Ovary (tissue), 10 donors: ENCODE measurements at regions of chr20 and their contacts with region 1.

Region 1: GRCh38 chr20:4108495-4109306 is 93.3 kb upstream of the RNF24 start:
- DNase-seq: peak; percentile 58 to 76 (median 71)
- H3K4me3 ChIP-seq: no peak overlapping the region
- H3K27ac ChIP-seq: no peak overlapping the region
- H3K4me1 ChIP-seq: peaks cover 3% of the 10 kb centered on the region
- H3K27me3 ChIP-seq: no peaks in the 10 kb centered on the region
- CTCF ChIP-seq: peak; percentile 86 to 90 (median 90)
- EP300 ChIP-seq: no peak
- POLR2A ChIP-seq: no peak

Region 2: DNA sequence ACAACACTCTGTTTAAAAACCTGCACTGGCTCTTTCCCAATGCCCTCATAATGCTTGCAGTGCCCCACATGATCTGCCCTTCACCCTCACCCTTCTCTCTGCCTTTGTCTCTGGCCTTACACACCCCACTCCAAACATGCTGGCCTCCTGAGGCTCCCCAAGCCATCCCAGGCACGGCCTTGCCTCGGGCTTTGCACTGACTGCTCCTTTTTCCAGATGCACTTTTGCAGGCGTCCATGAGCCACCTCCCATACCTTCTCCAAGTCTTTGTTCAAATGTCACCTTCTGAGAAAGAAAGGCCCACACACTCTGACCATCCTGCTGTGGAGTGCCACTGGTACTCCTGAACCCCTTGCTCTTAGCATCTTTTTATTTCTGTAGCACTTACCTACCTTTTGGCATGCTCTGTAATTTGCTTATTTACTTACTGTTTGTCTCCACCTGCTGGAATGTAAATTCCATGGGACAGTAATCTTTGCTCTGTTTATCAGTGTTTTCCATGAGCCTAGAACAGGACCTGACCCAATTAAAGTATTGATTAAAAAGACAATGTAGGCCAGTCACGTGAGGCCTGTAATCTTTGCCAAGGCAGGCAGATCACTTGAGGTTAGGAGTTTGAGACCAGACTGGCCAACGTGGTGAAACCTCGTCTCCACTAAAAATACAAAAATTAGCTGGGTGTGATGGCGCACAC is 476.2 kb before region 1 on chr20:
- intact Hi-C with region 1: no loop called
- DNase-seq: no peak
- H3K4me3 ChIP-seq: no peak overlapping the region
- H3K27ac ChIP-seq: no peak overlapping the region
- H3K4me1 ChIP-seq: peaks cover 3% of the 10 kb centered on the region
- H3K27me3 ChIP-seq: no peaks in the 10 kb centered on the region
- CTCF ChIP-seq: no peak
- EP300 ChIP-seq: no peak
- POLR2A ChIP-seq: no peak

Region 3: GRCh38 chr20:4053071-4053919 is 55.4 kb before region 1 on chr20:
- intact Hi-C with region 1: no loop called
- DNase-seq: no peak
- H3K4me3 ChIP-seq: no peak overlapping the region
- H3K27ac ChIP-seq: no peak overlapping the region
- H3K4me1 ChIP-seq: no peaks in the 10 kb centered on the region
- H3K27me3 ChIP-seq: no peaks in the 10 kb centered on the region
- CTCF ChIP-seq: no peak
- EP300 ChIP-seq: no peak
- POLR2A ChIP-seq: no peak

Region 4: DNA sequence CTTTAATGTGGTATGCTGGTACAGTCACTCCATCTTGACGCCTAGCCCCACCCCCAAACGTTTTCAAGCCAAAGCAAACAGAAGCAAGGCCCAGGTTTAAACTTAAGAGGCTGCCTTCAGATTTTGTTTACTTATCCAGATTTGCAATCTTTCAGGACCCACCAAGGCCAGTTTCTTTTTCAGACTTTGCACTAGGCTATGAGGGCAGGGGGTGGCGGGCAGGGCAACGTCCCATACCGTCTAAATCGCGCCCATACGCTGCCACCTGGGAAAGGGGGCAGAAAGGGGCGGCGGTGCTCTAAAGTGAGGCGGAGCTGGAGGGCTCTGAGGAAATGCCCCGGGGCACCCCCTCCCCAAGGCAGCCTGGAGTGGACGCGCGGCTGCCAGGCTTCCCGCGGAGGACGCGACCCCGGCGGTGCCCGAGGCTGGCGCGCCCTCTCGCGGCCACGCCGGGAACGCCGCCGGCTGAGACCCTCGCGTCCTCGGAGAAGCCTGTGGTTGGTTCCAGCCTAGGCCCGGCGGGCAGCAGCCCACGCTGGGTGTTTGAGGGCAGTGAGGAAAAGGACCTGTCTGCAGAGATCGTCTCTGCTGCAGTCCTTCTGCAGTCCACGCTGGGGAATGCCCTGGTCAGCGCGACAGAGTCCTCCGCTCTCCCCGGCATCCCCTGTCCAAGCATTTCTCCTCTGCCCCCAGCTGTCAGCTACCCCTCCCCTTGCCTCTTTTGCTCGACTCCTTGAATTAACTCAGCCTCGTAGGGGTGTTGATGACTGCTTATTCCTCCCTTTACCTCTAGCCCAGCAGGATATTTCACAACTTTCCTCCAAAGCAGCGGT is 483.8 kb after region 1 on chr20:
- intact Hi-C with region 1: loop called in 1 of 4 experiments (anchors 5 kb)
- DNase-seq: peak; percentile 14 to 74 (median 31)
- H3K4me3 ChIP-seq: peak overlapping the region; percentile 20
- H3K27ac ChIP-seq: no peak overlapping the region
- H3K4me1 ChIP-seq: no peaks in the 10 kb centered on the region
- H3K27me3 ChIP-seq: no peaks in the 10 kb centered on the region
- CTCF ChIP-seq: peak; percentile 50 to 70 (median 64)
- EP300 ChIP-seq: no peak
- POLR2A ChIP-seq: no peak

Region 5: DNA sequence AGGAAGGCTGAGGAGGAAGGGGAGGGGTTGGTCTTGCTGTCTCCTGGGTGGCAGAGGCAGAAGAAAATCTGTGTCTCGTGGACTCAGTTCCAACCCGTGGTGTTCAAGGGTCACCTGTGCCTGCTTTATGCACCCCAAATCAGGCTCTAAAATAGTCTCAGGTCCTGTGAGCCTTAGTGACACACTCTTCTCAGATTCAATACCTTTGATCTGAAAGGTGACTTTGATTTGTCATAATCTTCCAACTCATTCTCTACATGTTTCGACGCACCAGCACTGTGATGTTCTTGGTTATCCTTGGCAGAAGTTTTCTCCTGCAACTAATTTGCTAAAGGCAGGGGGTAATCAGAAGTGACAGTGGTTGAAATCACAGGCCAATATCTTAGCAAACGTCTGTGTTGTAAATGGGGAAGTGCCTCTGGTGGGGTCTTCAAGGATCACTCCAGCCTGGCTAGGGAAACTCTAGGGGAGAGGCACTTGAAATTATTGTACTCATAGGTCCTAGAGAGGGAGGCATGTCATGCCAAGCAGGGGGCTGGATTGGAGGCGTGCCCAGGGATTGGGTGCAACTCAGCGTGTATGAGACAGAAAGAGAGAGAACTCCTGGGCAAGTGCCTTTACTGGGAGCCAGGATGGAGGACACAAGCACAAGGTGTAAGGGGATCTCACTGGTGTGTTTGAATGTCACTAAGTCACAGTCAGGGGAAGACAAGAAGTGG is 594.0 kb after region 1 on chr20:
- intact Hi-C with region 1: no loop called
- DNase-seq: no peak
- H3K4me3 ChIP-seq: no peak overlapping the region
- H3K27ac ChIP-seq: no peak overlapping the region
- H3K4me1 ChIP-seq: peaks cover 2% of the 10 kb centered on the region
- H3K27me3 ChIP-seq: no peaks in the 10 kb centered on the region
- CTCF ChIP-seq: no peak
- EP300 ChIP-seq: no peak
- POLR2A ChIP-seq: no peak